Right cardiac atrium (tissue), 5 donors: ENCODE measurements at regions of chr6 and their contacts with region 1.

Region 1: GRCh38 chr6:13795041-13795750 is 19.2 kb downstream of the MCUR1 start:
- DNase-seq: peak; percentile 81 to 91 (median 86)
- ATAC-seq: peak; percentile 84 to 94
- H3K4me3 ChIP-seq: no peak overlapping the region
- H3K27ac ChIP-seq: no peak overlapping the region
- H3K4me1 ChIP-seq: no peaks in the 10 kb centered on the region
- H3K27me3 ChIP-seq: no peaks in the 10 kb centered on the region

Region 2: DNA sequence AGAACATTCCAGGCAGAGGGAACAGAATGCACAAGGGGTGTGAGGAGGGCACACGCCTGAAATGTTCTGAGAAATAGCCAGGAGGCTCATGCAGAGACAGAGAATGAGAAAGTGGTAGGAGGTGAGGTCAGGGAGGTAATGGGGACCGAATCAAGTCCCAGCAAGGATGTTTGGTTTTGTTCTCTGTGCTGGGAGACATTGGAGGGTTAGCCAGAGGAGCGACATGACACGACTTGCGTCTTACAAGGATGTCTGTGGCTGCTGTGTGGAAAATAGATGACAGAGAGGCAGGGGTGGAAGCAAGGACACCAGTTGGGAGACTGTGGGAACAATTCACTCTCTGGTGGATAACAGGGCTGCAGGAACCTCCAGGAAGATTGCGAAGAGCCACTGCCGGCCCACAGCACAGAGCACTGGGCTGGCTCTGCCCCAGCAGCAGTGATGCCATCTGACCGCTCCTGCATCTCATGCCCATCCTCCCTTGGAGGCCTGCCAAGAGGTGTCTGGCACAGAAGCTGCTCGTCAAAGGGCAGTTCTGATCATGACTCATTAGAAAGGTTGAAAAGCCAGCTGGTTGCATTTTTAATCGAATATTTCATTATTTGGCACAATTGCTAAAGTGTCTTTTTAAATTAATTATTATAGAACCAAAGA is 264.7 kb after region 1 on chr6:
- intact Hi-C with region 1: loop called in 2 of 4 experiments (anchors 5 to 10 kb)
- DNase-seq: peak; percentile 56 to 74 (median 64)
- ATAC-seq: peak; percentile 57 to 61
- H3K4me3 ChIP-seq: no peak overlapping the region
- H3K27ac ChIP-seq: no peak overlapping the region
- H3K4me1 ChIP-seq: peaks cover 3% of the 10 kb centered on the region
- H3K27me3 ChIP-seq: no peaks in the 10 kb centered on the region

Region 3: DNA sequence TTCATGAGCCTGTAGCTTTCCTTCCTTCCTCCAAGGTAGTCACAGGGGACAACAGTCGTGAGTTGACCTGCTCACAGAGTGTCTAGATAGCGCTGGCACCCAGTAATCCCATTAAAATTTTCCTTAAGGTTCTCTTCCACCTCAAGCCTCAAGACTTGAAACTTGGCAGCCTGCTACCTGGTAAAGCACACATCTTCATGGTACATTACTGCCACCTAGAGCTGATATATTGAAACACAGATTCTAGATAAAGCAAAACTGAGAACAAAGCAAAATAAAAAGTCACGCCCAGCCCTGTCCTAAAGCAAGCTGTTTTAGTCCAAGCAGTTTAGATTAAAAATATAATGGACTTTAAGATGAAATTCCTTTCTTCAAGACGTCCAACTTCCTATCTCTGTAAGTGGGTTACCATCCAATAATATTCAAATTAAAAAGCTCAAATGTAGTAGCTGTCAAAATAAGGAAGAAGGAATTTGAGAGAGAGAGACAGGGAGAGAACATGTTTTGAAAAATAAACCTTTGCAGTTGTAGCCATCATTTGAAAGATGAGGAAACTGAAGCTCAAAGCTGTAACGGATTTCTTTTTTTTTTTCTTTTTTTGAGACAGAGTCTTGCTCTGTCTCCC is 271.7 kb after region 1 on chr6:
- intact Hi-C with region 1: loop called in 1 of 4 experiments (anchors 10 kb)
- DNase-seq: no peak
- ATAC-seq: peak; percentile 59 to 83
- H3K4me3 ChIP-seq: no peak overlapping the region
- H3K27ac ChIP-seq: no peak overlapping the region
- H3K4me1 ChIP-seq: no peaks in the 10 kb centered on the region
- H3K27me3 ChIP-seq: no peaks in the 10 kb centered on the region